ENCODE measurements at regions of chr1 and their contacts with region 1.

Region 1: DNA sequence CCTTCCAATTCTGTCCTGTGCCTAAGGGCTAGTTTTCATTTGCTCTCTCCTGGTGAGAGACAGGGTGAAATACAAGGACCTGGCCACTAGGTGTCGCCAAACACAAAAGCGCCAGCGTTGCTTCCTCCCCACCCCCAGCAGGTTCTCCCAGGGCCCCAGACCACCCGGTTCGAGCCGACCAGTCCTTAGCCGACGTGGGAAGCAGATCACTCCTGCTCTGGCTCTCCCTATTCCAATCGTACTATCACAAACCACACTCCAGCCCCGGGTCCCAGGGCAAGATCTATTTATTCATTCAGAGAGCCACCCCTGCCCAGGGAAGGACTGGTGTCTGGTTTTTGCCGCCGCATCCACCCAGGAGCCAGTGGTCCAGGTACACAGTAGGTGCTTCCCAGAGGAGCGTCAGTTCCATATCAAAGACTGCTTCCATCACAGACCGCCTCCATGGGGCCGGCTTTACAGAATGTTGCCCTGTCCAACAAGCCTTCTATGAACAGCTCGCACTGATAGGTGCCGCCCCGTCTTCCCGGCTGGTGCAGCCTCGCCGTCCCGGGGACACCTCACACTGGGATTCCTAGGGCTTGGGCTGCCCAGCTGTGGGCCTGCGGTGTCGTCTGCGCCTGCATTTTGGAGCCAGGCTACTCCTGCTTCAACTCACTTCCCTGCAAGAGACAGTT is 35.0 kb downstream of the CTNNBIP1 start:
- DNase-seq: peak; percentile 75 to 78
- H3K4me3 ChIP-seq: peak overlapping the region; percentile 24
- H3K4me3 Mint-ChIP-seq: peak overlapping the region; percentile 49
- H3K27ac Mint-ChIP-seq: peak overlapping the region; percentile 49
- H3K4me1 ChIP-seq: no peaks in the 10 kb centered on the region
- H3K4me1 Mint-ChIP-seq: no peaks in the 10 kb centered on the region
- H3K27me3 ChIP-seq: no peaks in the 10 kb centered on the region
- H3K27me3 Mint-ChIP-seq: no peaks in the 10 kb centered on the region
- CTCF ChIP-seq: peak; percentile 85 to 88

Region 2: GRCh38 chr1:9321480-9321849 is 553.6 kb before region 1 on chr1:
- CTCF ChIA-PET with region 1: no interaction called
- POLR2A ChIA-PET with region 1: no interaction called
- intact Hi-C with region 1: no loop called
- DNase-seq: no peak
- H3K4me3 ChIP-seq: no peak overlapping the region
- H3K4me3 Mint-ChIP-seq: no peak overlapping the region
- H3K27ac Mint-ChIP-seq: no peak overlapping the region
- H3K4me1 ChIP-seq: no peaks in the 10 kb centered on the region
- H3K4me1 Mint-ChIP-seq: peaks cover 9% of the 10 kb centered on the region
- H3K27me3 ChIP-seq: no peaks in the 10 kb centered on the region
- H3K27me3 Mint-ChIP-seq: no peaks in the 10 kb centered on the region
- CTCF ChIP-seq: no peak

Region 3: DNA sequence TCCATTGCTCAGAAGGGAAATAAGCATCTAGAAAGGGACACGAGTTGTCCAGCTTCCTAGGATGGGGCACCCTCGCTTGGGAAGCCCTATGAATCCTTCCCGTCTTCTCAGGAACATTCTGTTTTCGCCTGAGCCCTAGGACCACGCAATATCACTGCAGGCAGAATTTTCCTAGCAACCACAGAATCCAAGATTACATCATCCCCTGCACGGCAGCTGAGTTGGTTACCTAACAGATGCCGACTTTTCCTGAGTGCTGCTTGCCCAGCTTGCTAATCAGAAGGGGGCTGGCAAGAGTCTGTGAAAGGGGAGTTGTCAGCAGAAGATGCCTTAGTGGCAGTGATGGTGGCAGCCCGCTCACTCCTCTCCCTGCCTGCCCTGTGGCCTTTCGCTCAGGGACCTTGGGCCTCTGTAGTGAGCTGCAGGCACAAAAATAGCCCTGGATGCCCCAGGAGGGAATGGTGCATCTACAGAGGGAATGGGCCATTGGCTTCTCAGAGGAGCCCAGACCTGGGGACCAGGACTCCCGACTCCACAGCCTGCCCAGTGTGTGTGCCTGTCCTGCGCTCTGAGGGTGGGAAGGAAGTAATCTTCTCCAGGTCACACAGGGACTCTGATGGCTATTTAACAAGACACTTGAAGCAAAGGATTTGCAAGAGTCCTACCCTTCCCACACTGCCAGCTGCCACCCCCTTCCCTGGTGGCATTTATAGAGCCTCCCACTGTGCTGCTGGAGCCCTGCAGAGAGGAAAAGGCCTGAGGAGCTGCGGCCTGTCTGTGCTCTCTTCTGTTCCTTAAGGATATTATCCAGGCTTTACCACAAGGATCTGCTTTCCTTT is 22.5 kb before region 1 on chr1:
- CTCF ChIA-PET with region 1: no interaction called
- POLR2A ChIA-PET with region 1: no interaction called
- intact Hi-C with region 1: no loop called
- DNase-seq: no peak
- H3K4me3 ChIP-seq: no peak overlapping the region
- H3K4me3 Mint-ChIP-seq: no peak overlapping the region
- H3K27ac Mint-ChIP-seq: no peak overlapping the region
- H3K4me1 ChIP-seq: no peaks in the 10 kb centered on the region
- H3K4me1 Mint-ChIP-seq: no peaks in the 10 kb centered on the region
- H3K27me3 ChIP-seq: no peaks in the 10 kb centered on the region
- H3K27me3 Mint-ChIP-seq: no peaks in the 10 kb centered on the region
- CTCF ChIP-seq: no peak

Region 4: GRCh38 chr1:9910425-9911178 is 35.5 kb after region 1 on chr1:
- CTCF ChIA-PET with region 1: interaction called, 4 read pairs
- POLR2A ChIA-PET with region 1: no interaction called
- intact Hi-C with region 1: loop called (anchors 2 kb)
- DNase-seq: peak; percentile 99
- H3K4me3 ChIP-seq: peak overlapping the region; percentile 50
- H3K4me3 Mint-ChIP-seq: peak overlapping the region; percentile 96
- H3K27ac Mint-ChIP-seq: peak overlapping the region; percentile 92
- H3K4me1 ChIP-seq: peaks cover 15% of the 10 kb centered on the region
- H3K4me1 Mint-ChIP-seq: peaks cover 26% of the 10 kb centered on the region
- H3K27me3 ChIP-seq: no peaks in the 10 kb centered on the region
- H3K27me3 Mint-ChIP-seq: no peaks in the 10 kb centered on the region
- CTCF ChIP-seq: no peak

Measured in Caco-2 (cell line).